Ovary (tissue), 10 donors: ENCODE measurements at regions of chr1 and their contacts with region 1.

Region 1: GRCh38 chr1:37438869-37439343 is 35.5 kb upstream of the ZC3H12A start:
- DNase-seq: no peak
- H3K4me3 ChIP-seq: no peak overlapping the region
- H3K27ac ChIP-seq: no peak overlapping the region
- H3K4me1 ChIP-seq: no peaks in the 10 kb centered on the region
- H3K27me3 ChIP-seq: no peaks in the 10 kb centered on the region
- CTCF ChIP-seq: no peak
- EP300 ChIP-seq: no peak
- POLR2A ChIP-seq: no peak

Region 2: DNA sequence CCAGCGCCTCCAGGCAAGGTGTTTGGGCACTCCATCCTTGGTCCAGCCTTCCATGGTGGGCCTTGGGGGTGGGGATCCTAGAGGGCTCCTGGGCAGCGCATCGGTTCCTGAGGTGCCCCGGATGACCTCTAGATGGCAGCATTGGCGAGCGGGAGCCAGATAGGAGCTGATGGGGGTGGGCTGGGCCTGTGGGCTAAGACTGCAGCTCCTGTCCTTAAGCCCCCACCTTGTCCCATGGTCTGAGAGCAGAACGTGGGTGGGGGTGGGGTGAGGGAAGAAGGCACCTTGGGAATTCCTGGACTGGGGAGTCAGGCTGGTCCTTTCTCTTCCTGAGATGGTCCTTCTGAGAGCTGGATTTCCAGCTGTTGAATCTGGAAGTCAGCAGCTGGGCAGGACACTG is 862.8 kb before region 1 on chr1:
- intact Hi-C with region 1: loop called in 1 of 4 experiments (anchors 5 kb)
- DNase-seq: peak; percentile 13 to 71 (median 44)
- H3K4me3 ChIP-seq: no peak overlapping the region
- H3K27ac ChIP-seq: no peak overlapping the region
- H3K4me1 ChIP-seq: no peaks in the 10 kb centered on the region
- H3K27me3 ChIP-seq: no peaks in the 10 kb centered on the region
- CTCF ChIP-seq: peak in 1 of 3 donors; percentile 20
- EP300 ChIP-seq: no peak
- POLR2A ChIP-seq: no peak

Region 3: DNA sequence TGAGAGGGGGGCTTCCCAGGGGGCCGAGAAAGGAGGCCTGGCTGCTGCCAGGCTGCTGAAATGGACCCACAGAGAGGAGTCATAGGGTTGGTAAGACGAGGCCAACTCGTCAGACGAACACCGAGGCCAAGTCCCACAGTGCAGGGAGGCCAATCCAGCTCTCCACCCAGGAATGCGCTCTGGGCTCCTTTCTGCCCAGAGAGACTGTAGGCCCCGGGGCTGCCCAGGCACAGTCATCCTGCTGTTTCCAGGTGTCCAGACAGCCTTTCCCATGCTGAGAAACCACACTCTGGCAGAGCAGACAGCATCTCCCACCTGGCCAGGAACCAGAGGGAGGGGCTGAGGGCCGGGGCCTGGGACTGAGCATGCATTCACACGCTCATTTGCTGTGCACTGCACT is 222.5 kb after region 1 on chr1:
- intact Hi-C with region 1: no loop called
- DNase-seq: no peak
- H3K4me3 ChIP-seq: no peak overlapping the region
- H3K27ac ChIP-seq: no peak overlapping the region
- H3K4me1 ChIP-seq: no peaks in the 10 kb centered on the region
- H3K27me3 ChIP-seq: no peaks in the 10 kb centered on the region
- CTCF ChIP-seq: no peak
- EP300 ChIP-seq: no peak
- POLR2A ChIP-seq: no peak